ENCODE measurements at regions of chr4 and their contacts with region 1.

Region 1: DNA sequence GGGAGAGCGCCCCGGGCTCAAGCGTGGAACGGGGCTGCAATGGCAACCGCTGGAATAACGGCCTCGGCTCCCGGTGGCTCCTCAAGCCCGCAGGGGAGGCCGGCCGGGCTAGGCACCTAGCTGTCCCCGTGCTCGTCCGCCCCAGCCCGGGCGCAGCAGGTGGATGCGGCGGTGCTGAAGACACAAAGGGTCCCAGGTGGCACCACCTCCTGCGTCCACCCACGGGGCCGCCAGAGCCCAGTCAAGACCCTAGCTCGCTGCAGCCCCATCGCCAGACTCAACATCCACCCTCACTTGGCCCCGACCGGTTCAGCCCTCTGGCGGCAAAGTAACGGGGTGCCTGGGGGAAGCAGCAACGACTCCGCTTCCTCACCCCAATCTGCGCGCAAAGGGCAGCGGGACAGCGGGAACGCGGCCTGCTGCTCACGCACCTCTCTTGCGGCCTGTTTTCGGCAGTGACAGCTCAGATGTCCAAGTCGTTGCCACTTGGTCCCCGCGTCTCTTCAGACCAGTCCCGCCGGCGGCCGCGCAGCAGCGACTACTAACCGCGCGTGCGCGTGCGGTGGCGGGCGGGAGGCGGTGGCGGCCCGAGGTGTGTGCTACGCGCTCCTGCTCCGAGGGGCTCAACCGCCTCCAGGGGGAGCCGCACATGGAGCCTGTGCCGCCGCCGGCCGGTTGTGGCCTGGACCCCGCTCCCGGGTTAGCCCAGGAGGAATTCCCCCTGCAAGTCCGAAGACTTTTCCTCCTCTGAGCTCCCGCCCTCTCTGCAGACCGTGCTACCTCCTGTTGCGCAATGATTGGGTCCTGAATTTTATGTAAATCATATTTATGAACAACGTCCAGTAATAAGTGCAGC is at the start of gene CLGN:
- DNase-seq: peak; percentile 63 to 77
- ATAC-seq: peak; percentile 95 to 97
- H3K4me3 ChIP-seq: peak within 1 kb of the TSS; percentile 80
- H3K27ac ChIP-seq: peak within 1 kb of the TSS; percentile 82 to 89
- H3K4me1 ChIP-seq: peaks cover 9% of the 10 kb centered on the region; the same call in 2 of the 3 replicates
- CTCF ChIP-seq: peak; percentile 45
- EP300 ChIP-seq: no peak
- POLR2A ChIP-seq: peak; percentile 48; the same call in 1 of the 2 replicates
- RAD21 ChIP-seq: no peak; a peak in 1 of 5 replicates
- polyA plus RNA-seq, gene CLGN: 20.6 and 30.9 TPM in 2 replicates

Region 2: GRCh38 chr4:140373328-140374129 is 53.8 kb before region 1 on chr4 and contains the start of gene SCOC:
- CTCF ChIA-PET with region 1: interaction called, 3 read pairs
- POLR2A ChIA-PET with region 1: interaction called, 13 read pairs
- DNase-seq: peak; percentile 96 to 98
- ATAC-seq: peak; percentile 96 to 98
- H3K4me3 ChIP-seq: peak within 1 kb of the TSS; percentile 93
- H3K27ac ChIP-seq: peak within 1 kb of the TSS; percentile 83 to 96
- H3K4me1 ChIP-seq: peaks cover 25% of the 10 kb centered on the region
- CTCF ChIP-seq: no peak
- EP300 ChIP-seq: no peak
- POLR2A ChIP-seq: peak; percentile 41
- RAD21 ChIP-seq: no peak
- polyA plus RNA-seq, gene SCOC: 49.7 and 71.9 TPM in 2 replicates

Region 3: DNA sequence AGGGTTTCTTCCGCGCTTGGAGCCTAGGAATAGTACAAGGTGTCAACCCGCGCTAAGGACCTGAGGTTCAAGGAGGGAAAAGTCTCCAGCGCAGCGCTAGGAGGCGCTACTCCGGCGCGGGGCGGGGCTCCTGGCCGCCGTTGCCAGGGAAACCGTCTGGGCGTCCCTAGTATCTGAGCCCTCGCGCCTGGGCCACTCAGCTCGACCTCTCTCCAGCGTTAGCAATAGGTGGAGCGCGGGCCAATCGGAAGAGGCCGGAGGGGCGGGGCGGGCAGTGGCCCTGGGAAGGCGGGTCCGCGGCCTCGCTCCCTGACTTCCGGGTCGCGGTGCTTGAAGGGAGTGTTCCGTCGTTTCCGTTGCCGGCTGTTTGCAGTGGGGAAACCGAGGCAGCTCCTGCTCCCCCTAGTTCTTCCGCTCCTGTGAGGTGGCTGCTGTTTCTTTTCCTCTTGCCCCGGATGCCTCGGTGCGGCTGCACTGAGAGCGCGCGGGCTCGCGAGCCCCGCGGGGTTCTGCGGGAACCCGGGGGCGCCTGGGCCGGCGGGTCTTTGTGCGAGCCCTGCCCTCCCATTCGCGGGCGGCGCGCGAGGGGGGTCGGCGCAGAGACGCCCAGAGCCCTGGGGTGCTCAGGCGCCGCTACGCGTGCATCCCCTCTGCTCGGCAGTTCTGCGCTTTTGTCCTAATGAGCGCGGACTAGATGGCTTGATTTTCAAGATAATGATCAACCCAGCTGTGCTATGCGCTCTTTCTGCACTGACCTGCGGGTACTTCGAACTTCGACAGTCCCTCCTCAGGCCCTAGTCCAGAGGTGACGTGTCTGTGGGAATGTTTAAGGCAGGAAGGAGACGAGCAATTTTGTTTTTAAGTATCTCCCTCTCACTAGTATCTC is 96.8 kb after region 1 on chr4 and contains the start of gene ELMOD2:
- CTCF ChIA-PET with region 1: interaction called, 10 read pairs
- POLR2A ChIA-PET with region 1: interaction called, 3 read pairs
- DNase-seq: peak; percentile 91 to 95
- ATAC-seq: peak; percentile 100
- H3K4me3 ChIP-seq: peak within 1 kb of the TSS; percentile 62
- H3K27ac ChIP-seq: peak within 1 kb of the TSS; percentile 86 to 91
- H3K4me1 ChIP-seq: peaks cover 10% of the 10 kb centered on the region; the same call in 2 of the 3 replicates
- CTCF ChIP-seq: peak; percentile 71
- EP300 ChIP-seq: no peak
- POLR2A ChIP-seq: peak; percentile 77
- RAD21 ChIP-seq: peak; percentile 30 to 35; a peak in 2 of 5 replicates
- polyA plus RNA-seq, gene ELMOD2: 24.3 and 36.6 TPM in 2 replicates

Region 4: GRCh38 chr4:140720387-140721304 is 293.3 kb after region 1 on chr4:
- CTCF ChIA-PET with region 1: no interaction called
- POLR2A ChIA-PET with region 1: no interaction called
- DNase-seq: no peak
- ATAC-seq: no peak
- H3K4me3 ChIP-seq: no peak overlapping the region
- H3K27ac ChIP-seq: no peak overlapping the region
- H3K4me1 ChIP-seq: peaks cover 20% of the 10 kb centered on the region
- CTCF ChIP-seq: no peak
- EP300 ChIP-seq: no peak
- POLR2A ChIP-seq: no peak
- RAD21 ChIP-seq: no peak